ENCODE measurements at regions of chr2 and their contacts with region 1.

Region 1: DNA sequence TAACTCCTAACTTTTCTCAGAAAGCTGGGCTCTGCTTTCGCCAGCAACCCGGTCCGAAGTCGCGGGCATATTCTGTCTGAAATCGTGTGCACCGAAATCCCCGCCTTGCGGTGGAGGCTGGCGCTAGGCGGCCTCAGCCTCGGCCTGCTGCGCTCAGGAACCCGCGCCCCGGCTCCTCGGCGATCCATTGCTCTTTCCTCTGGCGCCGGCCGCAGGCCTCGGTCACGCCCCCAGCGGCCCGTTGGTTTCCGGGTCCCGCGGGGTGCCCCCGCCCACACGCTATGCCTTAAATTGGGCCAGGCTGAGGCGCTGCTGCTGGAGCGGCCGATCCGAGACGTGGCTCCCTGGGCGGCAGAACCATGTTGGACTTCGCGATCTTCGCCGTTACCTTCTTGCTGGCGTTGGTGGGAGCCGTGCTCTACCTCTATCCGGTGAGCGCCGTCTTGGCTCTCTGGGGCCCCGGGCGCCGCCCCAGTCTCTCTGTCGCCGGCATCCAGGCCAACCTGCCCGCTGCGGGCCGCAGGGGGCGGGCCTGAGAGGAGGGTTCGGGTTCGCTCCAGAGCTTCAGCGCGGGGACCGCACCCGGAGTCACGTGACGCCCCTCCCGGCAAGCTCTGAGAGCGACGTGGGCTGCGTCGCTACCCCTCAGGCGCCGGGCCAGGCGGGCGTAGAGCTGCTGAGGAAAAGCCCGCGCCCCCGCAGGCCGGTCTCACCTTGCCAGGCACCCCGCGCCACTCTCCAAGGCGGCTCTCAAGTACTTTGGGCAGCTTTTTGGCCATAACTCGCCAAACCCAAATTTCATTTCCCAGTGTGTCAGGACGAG is at the start of gene CYP20A1:
- DNase-seq: peak; percentile 90
- H3K4me3 Mint-ChIP-seq: peak within 1 kb of the TSS; percentile 86
- H3K27ac Mint-ChIP-seq: peak within 1 kb of the TSS; percentile 96
- H3K4me1 Mint-ChIP-seq: peaks cover 14% of the 10 kb centered on the region
- H3K27me3 Mint-ChIP-seq: no peaks in the 10 kb centered on the region
- CTCF ChIP-seq: no peak
- total RNA-seq, gene CYP20A1: 14.5 and 15.9 TPM in 2 replicates

Region 2: DNA sequence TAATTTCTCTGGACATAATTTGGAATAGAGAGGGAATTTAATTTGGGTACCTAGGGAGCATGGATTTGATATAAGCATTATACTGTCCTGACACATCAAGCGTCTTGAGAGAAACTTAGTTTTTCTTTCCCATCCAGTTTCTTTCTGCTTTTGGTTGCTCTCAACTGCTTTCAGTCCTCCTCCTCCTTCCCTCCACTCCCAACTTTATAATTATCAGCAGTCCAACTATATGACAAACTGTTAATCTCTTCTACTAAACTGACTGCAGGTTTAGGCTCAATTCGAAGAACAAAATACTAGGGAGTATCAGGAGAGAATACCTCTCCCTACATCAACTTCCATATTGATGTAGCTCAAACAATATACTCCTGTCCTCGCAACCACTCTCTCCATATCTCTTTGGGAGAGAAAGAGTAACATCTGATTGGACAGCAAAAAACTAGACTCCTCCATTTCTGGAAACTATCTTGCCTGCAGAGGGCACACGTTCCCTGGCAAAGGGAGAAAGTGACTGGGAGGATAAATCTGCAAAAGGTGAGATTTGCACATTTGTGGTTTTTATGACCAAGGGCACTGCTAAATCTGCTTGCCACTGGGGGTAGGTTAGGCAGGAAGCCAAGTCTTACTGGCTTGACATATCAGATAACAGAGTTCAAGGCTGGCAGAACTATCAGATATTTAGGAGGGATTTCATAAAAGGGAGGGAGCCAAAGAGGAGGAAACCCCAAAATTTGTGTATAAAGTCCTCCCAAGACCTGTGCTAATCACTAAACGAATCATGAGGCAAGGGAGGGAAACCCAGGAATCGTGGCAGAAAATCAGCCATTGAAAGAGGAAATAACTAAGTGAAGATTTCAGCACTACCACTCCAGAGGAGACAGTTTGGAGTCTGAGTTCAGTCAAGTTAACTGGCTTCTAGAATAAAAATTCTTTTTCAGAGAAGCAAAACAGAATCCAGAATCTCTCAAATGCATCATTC is 407.4 kb before region 1 on chr2:
- CTCF ChIA-PET with region 1: no interaction called
- POLR2A ChIA-PET with region 1: no interaction called
- intact Hi-C with region 1: loop called (anchors 5 kb)
- DNase-seq: peak; percentile 84
- H3K4me3 Mint-ChIP-seq: no peak overlapping the region
- H3K27ac Mint-ChIP-seq: no peak overlapping the region
- H3K4me1 Mint-ChIP-seq: peaks cover 8% of the 10 kb centered on the region
- H3K27me3 Mint-ChIP-seq: no peaks in the 10 kb centered on the region
- CTCF ChIP-seq: peak; percentile 46

Region 3: GRCh38 chr2:202911512-202912341 is 327.2 kb before region 1 on chr2 and contains the starts of genes CARF and WDR12:
- CTCF ChIA-PET with region 1: no interaction called
- POLR2A ChIA-PET with region 1: interaction called, 11 read pairs
- intact Hi-C with region 1: loop called (anchors 5 kb)
- DNase-seq: peak; percentile 95
- H3K4me3 Mint-ChIP-seq: peak within 1 kb of the TSS; percentile 96
- H3K27ac Mint-ChIP-seq: peak within 1 kb of the TSS; percentile 87
- H3K4me1 Mint-ChIP-seq: peaks cover 18% of the 10 kb centered on the region
- H3K27me3 Mint-ChIP-seq: no peaks in the 10 kb centered on the region
- CTCF ChIP-seq: no peak
- total RNA-seq, gene CARF: 6.8 and 8.2 TPM in 2 replicates
- total RNA-seq, gene WDR12: 141 and 146 TPM in 2 replicates

Region 4: GRCh38 chr2:203225423-203226039 is 13.4 kb before region 1 on chr2:
- CTCF ChIA-PET with region 1: interaction called, 26 read pairs
- POLR2A ChIA-PET with region 1: interaction called, 12 read pairs
- intact Hi-C with region 1: no loop called
- DNase-seq: peak; percentile 41
- H3K4me3 Mint-ChIP-seq: no peak overlapping the region
- H3K27ac Mint-ChIP-seq: no peak overlapping the region
- H3K4me1 Mint-ChIP-seq: no peaks in the 10 kb centered on the region
- H3K27me3 Mint-ChIP-seq: no peaks in the 10 kb centered on the region
- CTCF ChIP-seq: peak; percentile 83

Region 5: GRCh38 chr2:203327901-203328759 is 89.2 kb after region 1 on chr2 and contains the start of gene ABI2:
- CTCF ChIA-PET with region 1: no interaction called
- POLR2A ChIA-PET with region 1: interaction called, 17 read pairs
- intact Hi-C with region 1: loop called (anchors 5 kb)
- DNase-seq: peak; percentile 73
- H3K4me3 Mint-ChIP-seq: peak within 1 kb of the TSS; percentile 76
- H3K27ac Mint-ChIP-seq: peak within 1 kb of the TSS; percentile 61
- H3K4me1 Mint-ChIP-seq: peaks cover 18% of the 10 kb centered on the region
- H3K27me3 Mint-ChIP-seq: no peaks in the 10 kb centered on the region
- CTCF ChIP-seq: no peak
- total RNA-seq, gene ABI2: 57.3 and 65.6 TPM in 2 replicates